ENCODE measurements at regions of chr15 and their contacts with region 1.

Region 1: GRCh38 chr15:38647683-38648082 is 83.1 kb upstream of the RASGRP1 start:
- DNase-seq: no peak
- H3K4me3 Mint-ChIP-seq: no peak overlapping the region
- H3K27ac Mint-ChIP-seq: no peak overlapping the region
- H3K4me1 Mint-ChIP-seq: peaks cover 74% of the 10 kb centered on the region
- H3K27me3 Mint-ChIP-seq: no peaks in the 10 kb centered on the region

Region 2: DNA sequence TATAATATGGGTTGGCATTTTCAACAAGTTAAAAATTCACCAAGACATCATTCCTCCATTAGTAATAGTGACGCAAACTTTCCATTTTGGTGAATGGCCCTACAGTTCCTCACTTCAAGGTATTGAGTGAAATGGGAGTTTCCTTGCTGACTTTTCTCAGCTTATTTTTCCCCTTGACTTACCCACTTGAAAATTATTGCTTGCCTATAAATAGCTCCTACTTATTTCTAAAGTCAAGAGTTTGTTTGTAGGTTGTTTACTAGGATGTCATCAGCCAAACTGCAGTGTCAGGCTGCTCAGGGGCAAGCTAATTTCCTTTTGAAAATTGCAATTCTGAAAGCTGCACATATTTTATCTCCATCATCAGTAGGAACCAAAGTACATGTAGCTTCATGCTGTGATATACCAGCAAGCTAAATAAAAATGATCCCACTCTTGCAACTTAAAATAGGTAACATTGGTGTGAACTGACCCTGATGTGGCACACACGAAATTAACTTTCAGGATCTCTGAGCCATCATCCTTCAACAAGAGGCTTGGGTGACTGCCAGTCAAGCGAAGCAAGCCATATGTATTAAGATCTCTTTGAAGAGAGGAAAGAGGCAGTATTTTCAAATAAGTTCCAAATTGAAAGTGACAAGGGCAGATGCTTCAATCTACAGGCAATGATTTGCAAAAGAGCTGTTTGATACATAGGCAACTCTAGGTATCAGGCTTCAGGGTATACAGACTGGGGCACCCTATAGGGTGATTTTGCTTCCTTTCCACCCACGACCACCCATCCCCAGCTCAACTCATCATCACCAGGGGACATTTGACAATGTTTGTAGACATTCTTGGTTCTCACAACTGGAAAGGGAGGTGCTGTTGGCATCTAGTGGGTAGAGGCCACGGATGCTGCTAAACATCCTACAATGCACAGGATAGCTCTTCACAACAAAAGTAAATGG is 16.3 kb before region 1 on chr15:
- CTCF ChIA-PET with region 1: interaction called, 13 read pairs
- POLR2A ChIA-PET with region 1: interaction called, 12 read pairs
- intact Hi-C with region 1: loop called (anchors 2 kb)
- DNase-seq: no peak
- H3K4me3 Mint-ChIP-seq: no peak overlapping the region
- H3K27ac Mint-ChIP-seq: peak overlapping the region; percentile 87
- H3K4me1 Mint-ChIP-seq: peaks cover 39% of the 10 kb centered on the region
- H3K27me3 Mint-ChIP-seq: no peaks in the 10 kb centered on the region

Region 3: DNA sequence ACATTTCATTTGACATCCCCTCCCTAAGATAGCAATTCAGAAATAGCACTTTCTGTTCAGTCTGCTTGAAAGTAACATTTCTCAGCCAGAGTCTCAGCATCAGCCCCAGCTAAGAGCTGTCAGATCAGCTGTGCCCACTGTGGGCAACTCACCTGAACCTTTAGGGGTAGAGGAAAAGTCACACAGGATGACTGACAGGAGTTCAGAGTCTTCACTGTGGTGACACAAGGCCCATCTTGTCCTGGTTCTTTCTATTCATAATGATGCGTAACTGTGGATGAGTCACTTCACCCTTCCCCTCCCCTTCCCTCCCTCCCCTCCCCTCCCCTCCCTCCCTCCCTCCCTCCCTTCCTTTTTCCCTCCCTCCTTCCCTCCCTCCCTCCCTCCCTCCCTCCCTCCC is 13.1 kb after region 1 on chr15:
- CTCF ChIA-PET with region 1: interaction called, 13 read pairs
- POLR2A ChIA-PET with region 1: interaction called, 6 read pairs
- intact Hi-C with region 1: loop called (anchors 1 kb)
- DNase-seq: peak; percentile 65
- H3K4me3 Mint-ChIP-seq: peak overlapping the region; percentile 62
- H3K27ac Mint-ChIP-seq: peak overlapping the region; percentile 75
- H3K4me1 Mint-ChIP-seq: peaks cover 77% of the 10 kb centered on the region
- H3K27me3 Mint-ChIP-seq: no peaks in the 10 kb centered on the region

Measured in activated CD4-positive, alpha-beta memory T cell treated with anti-CD3 and anti-CD28 coated beads for 36 hours (primary cell).